CD8-positive, alpha-beta T cell (primary cell): ENCODE measurements at regions of chr9 and their contacts with region 1.

Region 1: DNA sequence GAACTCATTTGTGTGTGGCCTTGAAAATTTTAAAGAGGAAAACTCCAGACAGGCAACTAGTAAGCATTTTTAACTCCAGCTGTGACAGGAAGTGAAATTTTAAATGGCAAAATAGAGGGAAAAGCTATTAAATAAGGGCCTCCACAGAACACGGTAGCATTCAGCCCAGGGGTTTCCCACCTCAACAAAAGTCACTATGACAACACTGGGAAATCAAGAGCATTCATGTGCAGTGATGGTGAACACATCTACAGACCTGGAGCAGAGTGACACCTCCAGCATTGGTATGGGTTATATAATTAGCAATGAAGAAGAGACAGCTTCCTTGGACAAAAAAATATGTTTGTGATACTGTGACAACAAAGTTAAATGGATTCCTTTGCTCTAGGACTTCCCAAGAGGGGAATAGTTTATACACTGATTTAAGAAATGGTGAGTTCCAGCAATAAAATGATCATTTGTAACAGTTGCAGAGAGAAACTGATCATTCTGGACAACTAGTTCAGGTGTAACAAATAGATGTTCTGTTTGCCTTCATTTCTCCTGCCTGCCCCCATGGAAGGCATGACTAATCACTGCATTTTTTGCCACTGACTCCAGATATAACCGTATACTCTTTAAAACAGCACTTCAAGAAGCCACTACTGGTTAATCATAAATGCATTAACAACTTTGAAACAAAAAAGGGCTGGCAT is 93.3 kb upstream of the SLC44A1 start:
- DNase-seq: no peak
- ATAC-seq: no peak
- H3K4me3 ChIP-seq: no peak overlapping the region
- H3K4me3 Mint-ChIP-seq: no peak overlapping the region
- H3K27ac ChIP-seq: no peak overlapping the region
- H3K27ac Mint-ChIP-seq: no peak overlapping the region
- H3K4me1 ChIP-seq: no peaks in the 10 kb centered on the region
- H3K4me1 Mint-ChIP-seq: peaks cover 21% of the 10 kb centered on the region
- H3K27me3 ChIP-seq: no peaks in the 10 kb centered on the region
- H3K27me3 Mint-ChIP-seq: no peaks in the 10 kb centered on the region
- CTCF ChIP-seq: no peak

Region 2: DNA sequence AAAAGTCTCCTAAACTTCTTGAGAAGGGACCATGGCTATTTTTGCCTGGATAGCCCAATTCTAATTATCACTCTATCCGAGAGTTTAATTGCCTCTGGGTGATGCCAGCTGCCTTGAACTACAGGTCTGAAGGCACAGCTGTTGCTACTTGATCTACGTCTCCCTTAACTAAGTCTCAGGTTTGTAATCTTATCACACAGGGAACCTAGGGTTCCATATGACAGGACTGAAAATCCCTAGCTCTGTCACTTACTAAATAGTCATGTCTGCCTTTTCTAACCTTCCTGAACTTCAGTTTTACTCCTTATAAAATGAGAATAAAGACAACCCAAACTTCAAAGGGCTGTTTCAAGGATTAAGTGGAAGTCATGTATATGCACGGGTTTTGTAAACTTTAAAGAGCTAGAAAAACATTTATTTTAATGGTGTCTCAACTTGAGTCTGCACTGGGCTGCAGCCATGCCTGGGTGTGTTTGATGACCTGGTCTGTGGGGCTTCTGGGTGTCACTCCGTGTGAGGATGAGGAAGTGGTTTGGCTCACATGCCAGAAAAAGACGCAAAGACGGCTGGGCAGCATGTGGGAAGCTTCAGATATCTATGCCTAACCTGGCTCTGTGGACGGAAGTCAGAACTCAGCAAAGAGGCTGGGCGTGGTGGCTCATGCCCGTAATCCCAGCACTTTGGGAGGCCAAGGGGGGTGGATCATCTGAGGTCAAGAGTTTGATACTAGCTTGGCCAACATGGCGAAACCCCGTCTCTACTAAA is 36.0 kb before region 1 on chr9:
- CTCF ChIA-PET with region 1: no interaction called
- POLR2A ChIA-PET with region 1: no interaction called
- intact Hi-C with region 1: loop called in 1 of 2 experiments (anchors 5 kb)
- DNase-seq: peak in 6 of 9 experiments; percentile 9 to 58 (median 30)
- ATAC-seq: peak; percentile 40
- H3K4me3 ChIP-seq: no peak overlapping the region
- H3K4me3 Mint-ChIP-seq: peak overlapping the region; percentile 57
- H3K27ac ChIP-seq: no peak overlapping the region
- H3K27ac Mint-ChIP-seq: no peak overlapping the region
- H3K4me1 ChIP-seq: peaks cover 24% of the 10 kb centered on the region
- H3K4me1 Mint-ChIP-seq: peaks cover 32% of the 10 kb centered on the region
- H3K27me3 ChIP-seq: no peaks in the 10 kb centered on the region
- H3K27me3 Mint-ChIP-seq: peaks cover under 1% of the 10 kb centered on the region
- CTCF ChIP-seq: no peak

Region 3: DNA sequence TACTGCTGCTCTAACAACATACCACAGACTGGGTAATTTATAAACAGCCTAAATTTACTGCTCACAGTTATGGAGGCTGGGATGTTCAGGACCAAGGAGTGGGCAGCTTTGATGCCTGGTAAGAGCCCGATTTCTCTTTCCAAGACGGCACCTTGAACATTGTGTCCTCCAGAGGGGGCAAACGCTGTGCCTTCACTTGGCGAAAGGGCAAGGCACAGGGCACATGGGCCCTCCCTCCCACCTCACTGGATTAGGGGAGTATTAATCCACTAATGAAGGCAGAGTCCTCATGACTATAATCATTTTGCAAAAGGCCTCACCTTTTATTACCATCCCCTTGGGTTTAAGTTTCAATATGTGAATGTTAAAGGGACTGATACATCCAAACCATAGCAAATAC is 940.9 kb after region 1 on chr9:
- CTCF ChIA-PET with region 1: no interaction called
- POLR2A ChIA-PET with region 1: no interaction called
- intact Hi-C with region 1: no loop called
- DNase-seq: no peak
- ATAC-seq: no peak
- H3K4me3 ChIP-seq: no peak overlapping the region
- H3K4me3 Mint-ChIP-seq: no peak overlapping the region
- H3K27ac ChIP-seq: no peak overlapping the region
- H3K27ac Mint-ChIP-seq: no peak overlapping the region
- H3K4me1 ChIP-seq: no peaks in the 10 kb centered on the region
- H3K4me1 Mint-ChIP-seq: no peaks in the 10 kb centered on the region
- H3K27me3 ChIP-seq: no peaks in the 10 kb centered on the region
- H3K27me3 Mint-ChIP-seq: no peaks in the 10 kb centered on the region
- CTCF ChIP-seq: no peak